ENCODE measurements at regions of chr1 and their contacts with region 1.

Region 1: DNA sequence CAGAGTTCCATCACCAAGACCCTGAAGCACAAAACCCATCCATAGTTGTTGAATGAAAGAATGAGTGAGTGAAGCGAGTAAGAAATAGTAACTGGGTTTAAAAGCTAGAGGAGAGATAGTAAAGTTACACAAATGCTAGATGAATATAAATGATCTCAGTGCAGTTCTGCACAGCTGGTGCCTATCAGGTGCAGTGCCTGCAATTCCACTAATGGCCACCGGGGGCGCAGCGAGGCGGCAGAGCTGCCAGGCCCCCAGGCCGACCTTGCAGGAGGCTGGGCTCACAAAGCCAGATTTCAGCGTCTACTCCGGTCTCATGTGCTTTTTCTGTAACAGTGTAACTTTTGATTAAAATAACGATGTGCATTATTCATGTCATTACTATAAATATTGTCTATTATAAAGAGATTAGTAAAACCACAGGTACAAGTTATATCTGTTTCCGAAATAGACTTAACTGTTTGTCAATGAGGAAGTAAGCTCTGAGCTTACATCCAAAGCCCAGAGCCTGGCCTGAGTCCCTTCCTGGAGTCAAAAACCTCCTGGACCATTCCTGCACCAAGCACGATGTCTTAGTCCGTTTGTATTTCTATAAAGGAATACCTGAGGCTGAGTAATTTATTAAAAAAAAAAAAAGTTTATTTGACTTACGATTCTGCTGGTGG is 477.6 kb downstream of the NPHP4 start:
- DNase-seq: peak; percentile 77
- H3K4me3 Mint-ChIP-seq: no peak overlapping the region
- H3K27ac Mint-ChIP-seq: no peak overlapping the region
- H3K4me1 Mint-ChIP-seq: peaks cover 8% of the 10 kb centered on the region
- H3K27me3 Mint-ChIP-seq: peaks cover 9% of the 10 kb centered on the region

Region 2: GRCh38 chr1:4960782-4961475 is 553.7 kb before region 1 on chr1:
- CTCF ChIA-PET with region 1: no interaction called
- intact Hi-C with region 1: no loop called
- DNase-seq: no peak
- H3K4me3 Mint-ChIP-seq: no peak overlapping the region
- H3K27ac Mint-ChIP-seq: no peak overlapping the region
- H3K4me1 Mint-ChIP-seq: peaks cover 2% of the 10 kb centered on the region
- H3K27me3 Mint-ChIP-seq: peaks cover 16% of the 10 kb centered on the region

Region 3: DNA sequence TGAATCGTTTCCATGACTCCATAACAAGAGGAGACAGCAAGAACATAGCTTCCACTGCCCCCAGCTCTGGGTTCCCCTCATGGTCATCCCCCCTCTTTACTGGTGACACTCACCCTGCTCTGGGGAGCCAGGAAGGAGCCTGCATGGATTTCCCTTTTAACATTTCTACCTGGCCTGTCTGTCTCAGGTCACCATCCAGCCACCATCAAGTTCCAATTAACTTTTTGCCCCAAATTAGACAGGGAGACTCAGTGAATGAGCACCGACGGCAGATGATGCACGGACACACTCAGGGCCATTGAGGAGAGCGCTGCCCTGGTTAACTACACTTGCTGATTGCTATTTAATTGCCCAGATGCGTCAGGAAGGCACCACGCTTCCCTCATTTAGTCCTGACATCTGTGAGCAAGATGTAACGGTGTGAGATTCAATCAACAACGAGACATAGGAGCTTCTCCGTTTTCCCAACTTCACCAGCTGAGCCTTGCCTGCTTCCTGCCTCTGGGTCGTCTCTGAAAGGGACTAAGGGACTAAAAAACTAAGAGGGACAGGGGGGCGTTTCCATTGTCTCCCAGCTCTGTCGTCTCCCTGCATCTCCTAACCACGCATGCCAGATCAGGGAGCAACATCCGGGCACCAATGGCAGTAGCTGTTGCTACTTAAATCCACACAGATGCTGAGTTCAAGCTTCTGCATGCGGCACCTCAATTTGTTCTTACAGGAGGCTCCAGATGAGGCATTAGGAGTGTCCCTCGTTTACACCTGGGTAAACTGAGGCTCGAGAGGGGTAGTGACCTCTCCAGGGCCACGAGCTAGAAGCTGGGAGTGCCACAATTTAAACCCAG is 50.9 kb after region 1 on chr1:
- CTCF ChIA-PET with region 1: interaction called, 10 read pairs
- intact Hi-C with region 1: no loop called
- DNase-seq: no peak
- H3K4me3 Mint-ChIP-seq: no peak overlapping the region
- H3K27ac Mint-ChIP-seq: no peak overlapping the region
- H3K4me1 Mint-ChIP-seq: no peaks in the 10 kb centered on the region
- H3K27me3 Mint-ChIP-seq: peaks cover 3% of the 10 kb centered on the region

Region 4: GRCh38 chr1:5620990-5621389 is 106.3 kb after region 1 on chr1:
- CTCF ChIA-PET with region 1: interaction called, 6 read pairs
- intact Hi-C with region 1: loop called (anchors 10 kb)
- DNase-seq: no peak
- H3K4me3 Mint-ChIP-seq: no peak overlapping the region
- H3K27ac Mint-ChIP-seq: no peak overlapping the region
- H3K4me1 Mint-ChIP-seq: no peaks in the 10 kb centered on the region
- H3K27me3 Mint-ChIP-seq: peaks cover 25% of the 10 kb centered on the region

Region 5: DNA sequence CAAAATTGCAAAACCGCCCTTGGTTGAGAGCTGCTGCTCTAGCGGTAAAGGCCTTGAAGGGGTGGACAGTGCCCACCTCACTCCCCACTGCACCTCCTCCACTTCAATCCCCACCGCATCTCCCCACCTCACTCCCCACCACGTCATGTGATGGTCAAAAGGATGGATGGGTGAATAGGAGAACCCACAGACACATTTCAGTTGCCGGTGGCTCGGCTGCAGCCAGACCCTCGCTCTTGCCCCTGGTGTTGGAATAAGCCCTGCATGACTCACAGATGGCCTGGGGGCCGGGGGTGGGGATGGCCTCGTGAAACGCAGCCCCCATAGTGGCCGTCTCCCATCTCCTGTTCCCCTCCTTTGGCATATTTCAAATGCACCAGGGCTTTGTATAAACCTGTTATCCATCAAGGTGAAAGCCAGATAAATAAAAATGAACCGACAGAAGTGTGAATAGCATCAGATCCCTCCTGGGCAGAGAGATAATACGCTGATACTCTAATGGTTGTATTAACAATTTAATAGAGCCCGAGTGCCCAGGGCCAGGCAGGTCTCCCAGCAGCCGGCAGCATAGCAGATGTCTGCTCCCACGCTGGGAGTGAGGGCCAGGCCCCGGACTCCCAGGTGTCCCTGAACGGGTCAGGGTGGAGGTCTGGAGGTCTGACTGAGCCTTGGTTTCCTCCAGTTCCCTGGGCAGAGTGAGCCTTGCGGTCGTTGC is 177.3 kb after region 1 on chr1:
- CTCF ChIA-PET with region 1: no interaction called
- intact Hi-C with region 1: no loop called
- DNase-seq: no peak
- H3K4me3 Mint-ChIP-seq: no peak overlapping the region
- H3K27ac Mint-ChIP-seq: no peak overlapping the region
- H3K4me1 Mint-ChIP-seq: no peaks in the 10 kb centered on the region
- H3K27me3 Mint-ChIP-seq: peaks cover 4% of the 10 kb centered on the region

Region 6: DNA sequence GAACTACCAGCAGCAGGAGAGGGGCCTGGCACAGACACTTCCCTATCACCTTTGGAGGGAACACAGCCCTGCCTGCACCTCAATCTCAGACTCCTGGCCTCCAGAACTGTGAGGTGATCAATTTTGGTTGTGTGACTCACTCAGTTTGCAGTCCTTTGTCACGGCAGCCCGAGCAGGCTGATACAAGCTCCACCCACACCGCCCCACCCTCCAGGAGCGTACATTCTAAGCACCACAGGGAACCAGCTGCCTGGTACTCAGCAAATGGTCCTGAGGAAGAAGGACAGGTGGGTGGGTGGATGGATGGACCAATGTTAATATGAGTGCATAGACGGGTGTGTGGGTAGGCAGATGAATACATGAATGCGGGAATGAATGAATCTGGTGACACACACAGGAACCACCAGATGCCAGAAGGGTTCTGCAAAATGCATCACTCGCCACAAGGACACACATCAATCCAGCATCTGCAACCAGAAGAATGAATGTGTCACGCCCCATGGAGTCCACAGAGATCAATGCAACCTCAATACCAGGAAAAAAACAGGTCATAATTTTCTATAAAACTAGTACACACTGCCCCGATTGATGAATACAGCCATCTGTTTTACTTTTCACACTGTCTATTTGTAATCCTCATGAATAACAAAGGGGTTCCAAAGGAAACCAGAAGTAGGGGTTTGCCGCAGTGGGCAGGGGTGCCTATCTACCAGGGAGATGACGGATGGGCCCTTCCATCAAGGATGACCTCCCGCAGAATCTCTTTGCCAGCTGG is 193.1 kb after region 1 on chr1:
- CTCF ChIA-PET with region 1: no interaction called
- intact Hi-C with region 1: no loop called
- DNase-seq: no peak
- H3K4me3 Mint-ChIP-seq: no peak overlapping the region
- H3K27ac Mint-ChIP-seq: no peak overlapping the region
- H3K4me1 Mint-ChIP-seq: no peaks in the 10 kb centered on the region
- H3K27me3 Mint-ChIP-seq: peaks cover 4% of the 10 kb centered on the region

Region 7: GRCh38 chr1:5745776-5746610 is 231.3 kb after region 1 on chr1:
- CTCF ChIA-PET with region 1: interaction called, 30 read pairs
- intact Hi-C with region 1: loop called (anchors 1 kb)
- DNase-seq: peak; percentile 67
- H3K4me3 Mint-ChIP-seq: no peak overlapping the region
- H3K27ac Mint-ChIP-seq: no peak overlapping the region
- H3K4me1 Mint-ChIP-seq: no peaks in the 10 kb centered on the region
- H3K27me3 Mint-ChIP-seq: peaks cover 18% of the 10 kb centered on the region

Region 8: GRCh38 chr1:5915587-5916571 is 401.2 kb after region 1 on chr1:
- CTCF ChIA-PET with region 1: interaction called, 5 read pairs
- intact Hi-C with region 1: loop called (anchors 2 kb)
- DNase-seq: peak; percentile 65
- H3K4me3 Mint-ChIP-seq: no peak overlapping the region
- H3K27ac Mint-ChIP-seq: peak overlapping the region; percentile 37
- H3K4me1 Mint-ChIP-seq: peaks cover 8% of the 10 kb centered on the region
- H3K27me3 Mint-ChIP-seq: no peaks in the 10 kb centered on the region

Measured in activated naive CD4-positive, alpha-beta T cell treated with anti-CD3 and anti-CD28 coated beads for 36 hours (primary cell).